HEK293 (cell line): ENCODE measurements at regions of chr22 and their contacts with region 1.

Region 1: DNA sequence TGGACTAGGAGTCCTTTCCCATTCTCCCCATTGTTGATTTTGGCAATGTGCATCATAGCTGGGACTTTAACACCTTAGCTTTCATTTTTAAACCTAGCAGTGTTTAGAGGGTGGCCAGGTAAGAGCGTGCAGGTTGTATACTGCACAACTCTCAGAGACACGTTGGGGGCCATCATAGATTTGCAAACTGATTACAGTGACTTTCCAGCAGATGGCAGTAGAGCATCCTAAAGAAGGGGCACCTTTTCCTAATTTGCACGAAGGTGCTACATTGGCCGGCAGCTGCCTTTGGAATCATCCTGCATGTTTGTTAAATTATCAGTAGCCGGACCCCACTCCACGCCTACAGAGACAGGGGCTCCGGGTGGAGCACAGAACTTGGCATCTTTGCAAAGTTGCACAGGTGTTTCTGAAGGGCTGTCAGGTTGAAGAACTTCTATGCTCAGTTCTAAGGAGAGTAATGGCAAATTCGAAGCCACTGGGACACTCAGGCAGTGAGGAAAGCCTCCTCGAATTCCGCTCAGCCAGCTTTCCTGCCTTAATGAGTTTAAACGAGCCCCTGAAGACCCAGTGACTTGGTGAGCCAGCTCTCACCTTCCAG is 7.7 kb downstream of the LHFPL7 start:
- H3K4me3 ChIP-seq: no peak overlapping the region
- H3K27ac ChIP-seq: no peak overlapping the region
- H3K4me1 ChIP-seq: no peaks in the 10 kb centered on the region
- CTCF ChIP-seq: peak; percentile 39; the same call in 1 of the 2 replicates

Region 2: GRCh38 chr22:24845041-24845898 is 93.6 kb before region 1 on chr22:
- CTCF ChIA-PET with region 1: interaction called, 10 read pairs
- POLR2A ChIA-PET with region 1: no interaction called
- H3K4me3 ChIP-seq: no peak overlapping the region
- H3K27ac ChIP-seq: no peak overlapping the region
- H3K4me1 ChIP-seq: no peaks in the 10 kb centered on the region
- CTCF ChIP-seq: no peak

Region 3: GRCh38 chr22:24951942-24952836 is 13.3 kb after region 1 on chr22 and contains the start of gene KIAA1671:
- CTCF ChIA-PET with region 1: interaction called, 56 read pairs
- POLR2A ChIA-PET with region 1: interaction called, 4 read pairs
- H3K4me3 ChIP-seq: peak within 1 kb of the TSS; percentile 79
- H3K27ac ChIP-seq: peak within 1 kb of the TSS; percentile 82
- H3K4me1 ChIP-seq: peaks cover 10% of the 10 kb centered on the region; the same call in 1 of the 2 replicates
- CTCF ChIP-seq: peak; percentile 88

Region 4: GRCh38 chr22:25013607-25014006 is 74.8 kb after region 1 on chr22:
- CTCF ChIA-PET with region 1: interaction called, 12 read pairs
- POLR2A ChIA-PET with region 1: no interaction called
- H3K4me3 ChIP-seq: no peak overlapping the region
- H3K27ac ChIP-seq: no peak overlapping the region
- H3K4me1 ChIP-seq: peaks cover 11% of the 10 kb centered on the region
- CTCF ChIP-seq: no peak

Region 5: GRCh38 chr22:25048659-25049647 is 110.1 kb after region 1 on chr22:
- CTCF ChIA-PET with region 1: interaction called, 300 read pairs
- POLR2A ChIA-PET with region 1: interaction called, 3 read pairs
- H3K4me3 ChIP-seq: no peak overlapping the region
- H3K27ac ChIP-seq: no peak overlapping the region
- H3K4me1 ChIP-seq: no peaks in the 10 kb centered on the region; the same call in 1 of the 2 replicates
- CTCF ChIP-seq: peak; percentile 68